Common myeloid progenitor, CD34-positive (primary cell): ENCODE measurements at regions of chr12 and their contacts with region 1.

Region 1: DNA sequence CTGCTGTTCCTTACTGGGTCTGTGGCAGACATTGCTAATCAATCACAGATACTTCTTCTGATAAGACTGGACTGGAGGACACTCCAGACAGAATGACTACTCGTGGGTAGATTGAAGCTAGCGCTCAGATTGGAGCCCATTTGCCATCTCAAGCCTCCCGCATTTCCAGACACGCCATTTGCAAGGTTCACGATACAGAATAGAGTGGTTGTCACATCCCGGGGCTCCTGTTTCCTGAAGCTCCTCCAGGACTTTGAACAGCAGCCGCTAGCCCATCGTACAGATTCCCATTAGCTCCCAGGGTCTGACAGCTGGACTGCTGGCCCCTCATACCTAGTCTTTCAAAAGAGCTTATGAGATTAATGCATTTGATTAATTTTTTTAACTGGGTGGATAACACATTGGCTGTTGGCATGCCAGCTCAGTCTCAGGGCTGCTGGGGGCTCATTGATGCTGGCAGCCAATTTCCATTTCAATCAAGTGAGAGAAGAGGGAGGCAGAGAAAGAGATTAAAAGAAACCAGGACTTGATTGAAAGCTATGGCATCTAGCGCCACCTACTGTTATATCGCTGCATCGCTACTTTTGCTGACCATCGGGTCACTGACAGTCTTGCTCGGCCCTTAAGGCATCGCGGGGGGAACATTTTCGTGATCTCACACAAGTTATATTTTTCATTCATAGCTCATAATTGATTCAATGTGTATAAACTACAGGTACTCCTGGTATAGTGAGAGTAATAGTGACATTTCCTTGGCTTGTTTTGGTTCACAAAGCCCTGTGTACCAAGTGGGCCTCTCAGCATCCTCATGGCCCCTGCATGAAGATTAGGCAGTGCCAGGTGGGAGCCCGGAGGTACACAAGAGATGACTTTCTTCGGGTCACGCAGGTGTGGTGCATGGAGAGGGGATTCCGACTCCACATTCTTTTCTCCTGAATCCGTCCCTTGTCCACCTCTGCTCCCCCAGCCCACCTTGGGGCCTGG is 78.6 kb downstream of the CCDC60 start:
- DNase-seq: peak; percentile 43 to 69 (median 52)
- H3K4me3 ChIP-seq: no peak overlapping the region
- H3K27ac ChIP-seq: no peak overlapping the region
- H3K4me1 ChIP-seq: no peaks in the 10 kb centered on the region
- H3K27me3 ChIP-seq: peaks cover 0 to 24% (median 6%) of the 10 kb centered on the region in 5 experiments

Region 2: DNA sequence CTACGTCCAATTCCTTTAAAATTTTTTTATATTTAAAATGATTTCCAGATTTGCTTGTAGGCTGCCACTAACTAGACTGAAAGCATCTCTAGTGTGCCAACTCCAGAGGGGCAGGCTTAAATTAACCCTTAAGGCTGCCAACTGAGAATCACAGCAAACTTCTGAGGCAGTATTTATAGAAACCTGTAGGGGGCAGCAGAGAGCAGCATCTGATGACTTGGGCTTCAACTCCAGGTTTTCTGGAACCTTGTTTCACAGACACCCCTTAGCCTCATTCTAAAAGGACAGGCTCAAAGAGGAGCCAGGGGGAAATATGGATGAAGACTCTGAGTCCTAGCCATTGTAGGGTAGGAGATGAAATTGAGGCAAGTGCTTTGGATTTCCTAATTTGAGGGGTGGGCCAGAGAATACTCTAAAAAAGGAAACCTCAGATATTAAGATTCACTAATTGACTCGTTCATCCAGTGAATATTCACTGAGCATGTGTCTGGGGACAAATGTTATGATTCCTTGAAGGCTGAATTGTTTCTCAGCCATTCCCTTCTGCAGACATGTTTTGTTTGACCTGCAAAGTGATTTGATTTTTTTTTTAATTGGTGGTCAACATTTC is 297.7 kb before region 1 on chr12:
- CTCF ChIA-PET with region 1: interaction called, 14 read pairs
- POLR2A ChIA-PET with region 1: no interaction called
- DNase-seq: peak; percentile 33 to 68 (median 53)
- H3K4me3 ChIP-seq: no peak overlapping the region
- H3K27ac ChIP-seq: no peak overlapping the region
- H3K4me1 ChIP-seq: no peaks in the 10 kb centered on the region
- H3K27me3 ChIP-seq: peaks cover 0 to 3% (median 0%) of the 10 kb centered on the region in 5 experiments

Region 3: GRCh38 chr12:119432949-119433348 is 19.8 kb after region 1 on chr12:
- CTCF ChIA-PET with region 1: no interaction called
- POLR2A ChIA-PET with region 1: no interaction called
- DNase-seq: no peak
- H3K4me3 ChIP-seq: no peak overlapping the region
- H3K27ac ChIP-seq: no peak overlapping the region
- H3K4me1 ChIP-seq: no peaks in the 10 kb centered on the region
- H3K27me3 ChIP-seq: peaks cover 0 to 6% (median 0%) of the 10 kb centered on the region in 5 experiments